ENCODE measurements at regions of chr5 and their contacts with region 1.

Region 1: DNA sequence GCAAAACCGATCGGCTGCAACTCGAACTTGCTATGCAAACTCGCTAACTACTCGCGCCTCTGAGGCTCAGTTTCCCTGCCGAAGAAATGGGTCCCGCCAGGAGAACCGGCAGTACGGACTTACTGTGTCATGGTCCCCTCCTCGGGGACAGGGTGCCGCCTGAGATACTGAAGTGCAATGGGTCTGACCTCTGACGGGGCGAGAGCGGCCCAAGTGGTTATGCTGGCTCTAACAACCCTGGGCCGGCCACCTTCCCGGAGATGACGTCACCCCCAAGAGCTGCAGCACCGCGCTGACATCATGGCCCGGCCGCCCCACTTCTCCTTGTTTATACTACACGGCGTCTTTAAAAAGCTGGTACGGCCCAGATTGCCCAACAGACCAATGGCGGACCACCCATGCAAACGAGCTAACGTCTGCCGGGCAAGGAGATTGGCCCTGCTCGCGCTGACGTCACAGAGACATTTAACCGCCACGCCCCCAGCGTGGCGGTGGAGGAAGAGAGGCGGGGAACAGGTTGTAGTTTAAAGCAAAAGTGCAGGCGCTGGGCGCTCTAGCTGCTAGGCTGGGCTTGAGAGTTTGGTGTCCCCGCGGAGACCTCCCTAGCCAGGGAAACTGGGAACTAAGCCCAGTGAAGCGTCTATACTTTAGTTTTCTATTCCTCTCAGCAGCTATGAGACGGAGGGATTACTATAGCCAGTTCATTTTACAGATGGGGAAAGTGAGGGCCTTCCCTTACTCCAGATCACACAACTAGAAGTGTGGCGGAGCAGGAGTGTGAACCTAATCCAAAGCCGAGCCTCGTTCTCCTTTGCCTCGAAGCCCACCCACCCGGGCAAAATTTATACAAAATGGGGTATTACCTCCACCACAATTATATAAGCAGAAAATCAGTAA is 654 bp upstream of the RNF44 start:
- DNase-seq: peak; percentile 99

Region 2: DNA sequence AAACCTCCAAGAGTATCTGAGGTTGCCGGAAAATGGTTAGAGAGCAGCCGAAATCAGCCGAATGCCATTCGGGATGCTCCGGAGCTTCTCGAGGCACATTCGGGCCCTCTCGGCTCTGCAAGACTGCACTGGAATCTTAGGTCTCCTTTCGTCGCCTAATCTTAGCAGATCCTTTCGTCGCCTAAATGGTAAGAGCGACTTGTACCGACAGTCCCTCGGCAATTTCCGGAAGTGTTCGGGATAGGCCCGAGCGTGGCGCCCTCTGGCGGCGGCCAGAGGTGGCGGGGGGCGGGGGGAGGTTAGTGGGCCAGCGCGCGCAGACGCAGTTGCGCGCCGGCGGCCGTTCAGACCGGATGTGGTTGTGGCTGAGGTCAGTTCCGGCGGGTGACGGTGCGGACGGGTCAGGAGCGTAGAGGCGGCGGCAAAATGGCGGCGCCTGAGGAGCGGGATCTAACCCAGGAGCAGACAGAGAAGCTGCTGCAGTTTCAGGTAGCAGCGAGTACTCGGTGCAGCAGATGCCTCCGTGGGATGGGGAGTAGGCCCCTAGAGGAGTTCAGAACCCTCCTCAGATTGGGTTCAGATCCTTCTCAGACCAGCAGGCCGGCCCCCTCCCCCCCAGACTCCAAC is 89.8 kb before region 1 on chr5 and contains the start of gene FAF2:
- intact Hi-C with region 1: loop called (anchors 10 kb)
- DNase-seq: peak; percentile 99
- total RNA-seq, gene FAF2: 27.3 to 27.7 TPM

Region 3: DNA sequence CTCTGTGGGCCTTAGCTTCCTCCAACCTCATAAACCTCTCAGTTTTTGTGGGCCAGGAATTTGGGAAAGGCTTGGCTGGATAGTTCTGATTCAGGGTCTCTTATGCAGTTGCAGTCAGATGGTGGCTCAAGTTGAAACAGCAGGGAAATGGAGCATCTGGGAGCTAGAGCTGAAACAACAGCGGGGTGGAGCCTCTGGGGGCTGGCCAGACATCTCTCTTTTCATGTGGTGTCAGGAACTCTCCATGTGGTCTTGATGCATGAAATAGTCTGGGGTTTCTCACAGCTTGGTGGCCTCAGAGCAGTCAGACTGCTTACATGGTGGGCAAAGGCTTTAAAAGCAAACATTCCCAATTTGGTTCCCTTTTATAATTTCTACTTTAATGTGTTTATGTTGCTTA is 498.1 kb after region 1 on chr5:
- intact Hi-C with region 1: loop called in 1 of 2 experiments (anchors 5 kb)
- DNase-seq: peak; percentile 20

Measured in posterior vena cava (tissue), 2 donors.